IMR-90 (cell line): ENCODE measurements at regions of chr18 and their contacts with region 1.

Region 1: DNA sequence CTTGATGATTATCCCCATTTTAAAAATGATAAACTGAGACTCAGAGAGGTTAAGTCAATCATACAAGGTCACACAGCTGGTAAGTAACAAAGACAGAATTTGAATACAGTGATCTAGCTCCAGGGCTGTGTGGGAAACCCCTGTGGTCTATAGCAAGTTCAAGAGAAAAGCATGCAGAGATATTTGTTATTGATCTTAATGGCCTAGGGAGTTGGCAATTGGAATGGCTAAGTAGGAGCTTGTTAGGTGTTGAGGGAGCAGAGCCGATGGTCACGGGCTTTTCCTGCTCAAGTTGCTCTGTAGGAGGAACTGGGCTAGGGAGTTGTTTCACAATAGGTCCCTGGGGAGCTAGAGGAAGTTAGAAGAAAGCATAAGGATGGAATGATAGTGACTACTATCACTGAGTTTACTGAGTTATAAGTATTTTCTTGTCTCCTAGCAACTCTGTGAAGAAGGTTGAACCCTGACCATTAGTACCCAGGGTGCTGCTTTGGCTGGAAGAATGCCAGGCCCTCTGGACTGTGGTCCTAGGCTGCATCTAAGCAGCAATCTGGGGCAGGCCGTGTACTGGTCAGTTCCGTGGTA is 30.0 kb downstream of the RNF125 start:
- DNase-seq: peak; percentile 3
- ATAC-seq: peak; percentile 44; the same call in 1 of the 2 replicates
- H3K4me3 ChIP-seq: no peak overlapping the region
- H3K27ac ChIP-seq: no peak overlapping the region
- H3K4me1 ChIP-seq: no peaks in the 10 kb centered on the region
- H3K27me3 ChIP-seq: no peaks in the 10 kb centered on the region
- CTCF ChIP-seq: no peak
- POLR2A ChIP-seq: no peak
- RAD21 ChIP-seq: no peak

Region 2: DNA sequence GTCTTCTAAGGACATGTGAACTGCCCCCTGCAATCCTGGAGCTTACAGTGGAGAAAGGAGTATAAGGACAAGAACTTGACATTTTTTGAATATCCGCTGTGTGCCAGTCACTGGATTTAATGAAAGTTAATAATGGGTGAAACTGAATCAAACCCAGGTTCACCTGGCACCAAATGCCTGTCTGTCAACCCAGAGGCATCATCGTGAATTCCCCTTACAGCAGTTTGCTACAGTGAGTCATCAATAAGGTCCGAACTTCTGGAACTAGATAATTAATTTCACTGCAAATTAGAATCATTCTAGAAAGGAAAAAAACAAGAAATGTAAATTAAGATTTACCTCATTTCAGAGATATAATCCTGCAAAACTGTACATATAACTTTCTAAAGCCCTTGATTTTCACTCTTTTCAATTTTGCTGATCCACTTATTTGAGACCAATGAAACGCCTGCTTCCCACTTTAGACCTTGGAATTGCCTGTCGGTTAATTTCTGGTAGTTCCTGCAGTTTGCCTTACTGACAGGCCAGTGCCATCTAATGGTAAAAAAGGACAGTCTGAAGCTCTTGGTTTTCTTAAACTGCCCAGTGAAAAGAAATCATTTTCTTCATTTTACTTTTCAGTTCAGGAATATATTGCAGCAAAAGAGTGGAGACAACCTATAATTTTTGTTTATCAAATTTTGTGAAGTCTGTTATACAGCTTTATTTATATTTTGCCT is 542.4 kb before region 1 on chr18:
- CTCF ChIA-PET with region 1: no interaction called
- POLR2A ChIA-PET with region 1: no interaction called
- dilution Hi-C with region 1: no loop called
- in situ Hi-C with region 1: no loop called
- intact Hi-C with region 1: no loop called
- DNase-seq: peak; percentile 21
- ATAC-seq: no peak
- H3K4me3 ChIP-seq: no peak overlapping the region
- H3K27ac ChIP-seq: no peak overlapping the region
- H3K4me1 ChIP-seq: no peaks in the 10 kb centered on the region
- H3K27me3 ChIP-seq: no peaks in the 10 kb centered on the region
- CTCF ChIP-seq: peak; percentile 30
- POLR2A ChIP-seq: no peak
- RAD21 ChIP-seq: peak; percentile 35

Region 3: GRCh38 chr18:31990823-31991222 is 57.8 kb before region 1 on chr18:
- CTCF ChIA-PET with region 1: no interaction called
- POLR2A ChIA-PET with region 1: interaction called, 16 read pairs
- dilution Hi-C with region 1: no loop called
- in situ Hi-C with region 1: no loop called
- intact Hi-C with region 1: no loop called
- DNase-seq: no peak
- ATAC-seq: no peak
- H3K4me3 ChIP-seq: no peak overlapping the region
- H3K27ac ChIP-seq: no peak overlapping the region
- H3K4me1 ChIP-seq: no peaks in the 10 kb centered on the region
- H3K27me3 ChIP-seq: no peaks in the 10 kb centered on the region
- CTCF ChIP-seq: no peak
- POLR2A ChIP-seq: no peak
- RAD21 ChIP-seq: no peak

Region 4: DNA sequence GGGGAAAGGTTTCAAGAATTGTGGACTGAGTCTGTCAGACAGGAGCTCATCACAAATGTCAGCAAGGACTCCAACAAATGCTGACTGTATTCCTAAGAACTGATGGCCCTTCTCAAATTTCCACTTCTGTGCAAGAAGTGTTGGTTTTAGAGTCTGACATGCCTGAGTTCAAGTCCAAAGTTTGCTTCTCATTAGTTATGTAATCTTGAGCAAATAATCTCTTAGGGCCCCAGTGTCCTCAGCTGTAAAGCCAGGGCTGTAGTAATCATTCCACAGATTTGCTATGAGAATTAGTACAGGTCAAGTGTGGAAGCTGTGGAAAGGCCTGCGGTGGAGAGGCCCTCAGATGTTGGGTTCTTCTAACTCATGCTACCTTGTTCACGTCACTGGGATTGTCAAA is 165.1 kb after region 1 on chr18:
- CTCF ChIA-PET with region 1: no interaction called
- POLR2A ChIA-PET with region 1: no interaction called
- dilution Hi-C with region 1: no loop called
- in situ Hi-C with region 1: no loop called
- intact Hi-C with region 1: no loop called
- DNase-seq: no peak
- ATAC-seq: no peak
- H3K4me3 ChIP-seq: no peak overlapping the region
- H3K27ac ChIP-seq: no peak overlapping the region
- H3K4me1 ChIP-seq: no peaks in the 10 kb centered on the region
- H3K27me3 ChIP-seq: no peaks in the 10 kb centered on the region
- CTCF ChIP-seq: no peak
- POLR2A ChIP-seq: no peak
- RAD21 ChIP-seq: no peak